ENCODE measurements at regions of chr17 and their contacts with region 1.

Region 1: DNA sequence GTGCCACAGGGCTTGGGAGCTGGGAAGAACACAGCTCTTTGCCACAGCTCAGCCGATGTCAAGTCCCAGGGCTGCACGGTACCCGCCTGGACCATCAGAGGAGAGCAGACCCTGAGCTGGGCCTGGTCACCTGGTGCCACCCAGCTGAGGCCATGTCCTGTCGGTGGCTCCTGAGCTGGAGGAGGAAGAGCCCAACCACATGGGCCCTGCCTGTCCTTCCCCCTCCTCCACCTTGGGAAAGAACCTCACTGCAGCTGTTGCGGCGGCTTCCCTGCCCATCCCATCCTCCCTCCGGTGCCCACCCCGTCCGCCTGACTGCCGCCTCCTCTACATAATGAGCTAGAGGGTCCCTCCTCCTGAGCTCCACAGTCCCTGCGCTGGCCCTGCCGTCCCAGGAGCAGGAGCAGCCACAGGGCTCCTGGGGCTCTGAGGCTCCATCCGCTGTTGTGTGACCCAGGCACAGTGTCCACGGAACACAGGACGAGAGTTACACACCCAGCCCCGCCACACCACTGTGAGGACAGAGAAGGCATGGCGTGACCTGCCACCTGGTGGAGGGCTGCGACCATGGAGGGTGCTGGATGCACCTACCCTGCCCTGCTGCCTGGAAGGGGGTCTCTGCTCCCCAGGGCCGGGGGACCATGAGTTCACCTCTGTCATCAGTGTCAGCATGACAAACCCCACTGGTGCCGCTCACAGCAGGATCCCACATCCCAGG is 21.4 kb upstream of the CHMP6 start:
- DNase-seq: peak; percentile 46
- H3K4me3 ChIP-seq: no peak overlapping the region
- H3K27ac ChIP-seq: no peak overlapping the region
- H3K4me1 ChIP-seq: no peaks in the 10 kb centered on the region
- H3K27me3 ChIP-seq: 0 out of 2 replicates have a peak, but pooled peaks cover 5% of the 10 kb centered on the region

Region 2: GRCh38 chr17:80430446-80431245 is 539.6 kb before region 1 on chr17:
- in situ Hi-C with region 1: loop called (anchors 5 kb)
- DNase-seq: no peak
- H3K4me3 ChIP-seq: no peak overlapping the region
- H3K27ac ChIP-seq: no peak overlapping the region
- H3K4me1 ChIP-seq: no peaks in the 10 kb centered on the region
- H3K27me3 ChIP-seq: no peaks in the 10 kb centered on the region

Region 3: DNA sequence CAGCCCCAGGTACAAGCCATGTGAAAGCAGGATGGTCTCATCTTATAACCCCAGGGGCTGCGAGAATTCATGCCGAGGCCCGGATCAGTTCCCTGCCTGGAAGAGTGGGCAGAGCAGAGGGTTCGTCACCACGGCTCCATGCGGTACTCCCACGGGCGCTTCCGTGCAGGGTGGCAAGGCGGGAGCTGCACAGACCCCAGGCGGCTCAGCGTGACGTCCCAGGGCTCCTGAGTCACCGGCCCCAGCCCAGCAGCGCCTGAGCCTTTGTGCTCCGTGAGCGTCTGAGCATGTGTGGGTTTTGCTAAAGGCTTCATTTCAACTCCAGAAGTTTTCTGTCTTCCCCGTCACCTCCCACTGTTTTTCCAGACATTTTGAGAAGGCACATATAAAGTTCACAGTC is 49.8 kb before region 1 on chr17:
- in situ Hi-C with region 1: no loop called
- DNase-seq: no peak
- H3K4me3 ChIP-seq: no peak overlapping the region
- H3K27ac ChIP-seq: no peak overlapping the region
- H3K4me1 ChIP-seq: no peaks in the 10 kb centered on the region
- H3K27me3 ChIP-seq: no peaks in the 10 kb centered on the region

Region 4: GRCh38 chr17:81057079-81057730 is 87.0 kb after region 1 on chr17:
- in situ Hi-C with region 1: no loop called
- DNase-seq: peak; percentile 51
- H3K4me3 ChIP-seq: no peak overlapping the region
- H3K27ac ChIP-seq: peak overlapping the region; percentile 33; the same call in 1 of the 2 replicates
- H3K4me1 ChIP-seq: no peaks in the 10 kb centered on the region
- H3K27me3 ChIP-seq: no peaks in the 10 kb centered on the region

Region 5: GRCh38 chr17:81171941-81172340 is 201.7 kb after region 1 on chr17:
- in situ Hi-C with region 1: no loop called
- DNase-seq: peak; percentile 27
- H3K4me3 ChIP-seq: no peak overlapping the region
- H3K27ac ChIP-seq: no peak overlapping the region
- H3K4me1 ChIP-seq: no peaks in the 10 kb centered on the region
- H3K27me3 ChIP-seq: 0 out of 2 replicates have a peak, but pooled peaks cover 5% of the 10 kb centered on the region

Measured in GM23248 (cell line).